ENCODE measurements at regions of chr2 and their contacts with region 1.

Region 1: DNA sequence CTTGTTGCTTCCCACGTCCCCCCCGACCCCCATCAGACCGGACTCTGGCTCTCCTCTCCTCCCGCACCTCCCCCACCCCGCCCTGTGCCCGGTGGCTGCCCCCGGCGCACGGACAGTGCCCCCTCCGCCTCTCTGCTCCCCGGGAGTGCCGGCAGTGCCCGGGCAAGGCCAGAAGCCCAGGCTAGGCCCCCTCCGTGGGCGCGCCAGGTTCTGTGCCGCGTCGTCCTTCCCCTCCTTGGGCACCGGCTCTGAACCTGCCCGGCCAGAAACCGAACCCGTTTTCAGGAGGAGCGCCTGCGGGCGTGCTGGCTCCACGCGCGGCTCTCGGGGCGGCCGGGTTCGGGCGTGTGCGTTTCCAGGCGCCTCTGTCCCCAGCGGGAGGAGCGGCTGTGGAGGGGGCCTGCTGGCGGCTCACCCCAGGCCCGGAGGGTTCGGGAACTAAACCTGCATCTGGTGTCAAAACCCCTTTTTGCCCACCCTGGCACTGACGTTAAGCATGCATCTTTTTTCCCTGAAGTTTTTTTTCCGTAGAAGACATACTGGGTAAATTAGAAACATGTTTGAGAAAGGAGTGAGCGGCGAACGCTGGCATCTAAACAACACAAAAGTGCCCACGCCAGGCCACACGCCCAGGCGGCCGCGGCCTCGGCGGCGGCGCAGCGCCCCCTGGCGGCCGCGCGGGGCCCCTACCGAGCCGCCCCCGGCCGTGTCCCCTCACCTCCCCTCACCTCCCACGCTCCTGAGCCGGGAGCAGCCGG is 123.9 kb upstream of the SLC1A4 start:
- DNase-seq: peak; percentile 80
- H3K4me3 ChIP-seq: peak overlapping the region; percentile 61
- H3K27ac ChIP-seq: peak overlapping the region; percentile 84
- H3K4me1 ChIP-seq: peaks cover 12% of the 10 kb centered on the region
- H3K27me3 ChIP-seq: no peaks in the 10 kb centered on the region
- CTCF ChIP-seq: peak; percentile 63; the same call in 1 of the 2 replicates

Region 2: GRCh38 chr2:64036034-64036705 is 829.1 kb before region 1 on chr2:
- CTCF ChIA-PET with region 1: no interaction called
- POLR2A ChIA-PET with region 1: no interaction called
- intact Hi-C with region 1: loop called (anchors 10 kb)
- DNase-seq: no peak
- H3K4me3 ChIP-seq: no peak overlapping the region
- H3K27ac ChIP-seq: no peak overlapping the region
- H3K4me1 ChIP-seq: no peaks in the 10 kb centered on the region
- H3K27me3 ChIP-seq: no peaks in the 10 kb centered on the region
- CTCF ChIP-seq: no peak

Region 3: GRCh38 chr2:64447317-64448040 is 417.8 kb before region 1 on chr2:
- CTCF ChIA-PET with region 1: interaction called, 13 read pairs
- POLR2A ChIA-PET with region 1: no interaction called
- intact Hi-C with region 1: no loop called
- DNase-seq: no peak
- H3K4me3 ChIP-seq: no peak overlapping the region
- H3K27ac ChIP-seq: no peak overlapping the region
- H3K4me1 ChIP-seq: no peaks in the 10 kb centered on the region
- H3K27me3 ChIP-seq: no peaks in the 10 kb centered on the region
- CTCF ChIP-seq: no peak

Region 4: DNA sequence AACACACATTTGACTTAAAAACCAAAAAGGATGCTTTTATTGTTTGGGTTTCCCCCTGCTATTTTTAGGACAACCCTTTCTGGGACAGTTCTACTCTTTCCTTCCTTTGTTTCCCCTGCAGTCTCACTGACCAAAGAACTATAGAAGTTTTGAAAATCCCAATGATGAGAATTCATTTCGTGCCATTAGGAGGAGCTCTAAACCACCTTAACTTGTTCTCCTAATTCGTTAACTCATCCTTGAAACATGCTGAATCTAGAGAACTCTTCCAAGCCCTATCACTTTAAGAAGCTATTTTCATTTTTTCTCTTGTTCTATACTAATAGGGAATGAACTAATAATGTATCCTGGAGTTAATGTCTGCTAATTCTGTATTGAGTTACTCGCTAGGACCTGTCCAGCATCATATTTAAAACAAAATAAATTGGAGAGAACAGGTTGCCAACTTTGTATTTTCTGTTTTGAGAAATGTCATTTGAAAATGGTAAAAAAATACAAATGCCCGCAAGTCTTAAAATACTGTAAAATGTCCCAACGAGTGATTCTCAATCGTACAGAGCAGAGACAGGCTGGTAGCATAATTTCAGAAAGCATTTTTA is 278.3 kb before region 1 on chr2:
- CTCF ChIA-PET with region 1: interaction called, 4 read pairs
- POLR2A ChIA-PET with region 1: no interaction called
- intact Hi-C with region 1: loop called (anchors 2 kb)
- DNase-seq: peak; percentile 68
- H3K4me3 ChIP-seq: no peak overlapping the region
- H3K27ac ChIP-seq: no peak overlapping the region
- H3K4me1 ChIP-seq: no peaks in the 10 kb centered on the region
- H3K27me3 ChIP-seq: no peaks in the 10 kb centered on the region
- CTCF ChIP-seq: peak; percentile 74

Region 5: DNA sequence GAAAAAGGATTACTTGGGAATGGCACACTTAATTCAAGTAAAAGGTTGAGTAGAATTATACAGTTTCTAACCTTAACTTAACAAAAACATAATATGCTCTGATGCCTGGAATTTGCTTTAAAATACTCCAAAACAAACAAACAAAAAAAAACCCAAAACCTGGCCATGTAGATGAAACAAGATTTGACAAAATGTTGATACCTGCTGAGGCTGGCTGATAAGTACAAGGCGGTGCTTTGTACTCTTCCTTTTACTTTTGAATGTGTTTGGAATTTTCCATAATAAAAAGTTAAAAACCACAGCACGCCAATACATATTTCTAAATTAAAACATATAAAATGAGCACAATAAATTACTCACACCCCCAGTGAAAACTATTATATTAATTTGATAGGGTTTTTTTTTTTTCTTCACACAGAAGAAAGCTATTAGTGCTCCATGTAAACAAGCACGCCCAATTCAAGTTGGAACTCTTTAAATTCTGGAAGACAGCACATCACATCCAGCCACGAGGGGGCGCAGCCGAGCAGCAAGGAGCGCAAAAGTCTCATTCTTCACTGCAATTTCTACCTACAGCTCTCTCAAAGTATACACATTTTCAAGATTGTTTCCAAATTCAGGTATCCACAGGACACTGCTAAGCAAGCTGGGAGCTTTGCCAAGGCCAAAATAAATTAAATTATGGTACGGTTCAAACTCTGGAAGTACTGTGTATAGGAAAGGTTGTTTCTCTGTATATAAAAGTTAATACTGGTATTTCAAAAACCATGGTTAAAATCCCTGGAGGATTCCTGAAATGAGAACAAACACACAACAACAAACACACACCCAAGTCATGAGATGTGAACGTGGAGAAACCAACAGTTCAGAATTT is 219.0 kb before region 1 on chr2:
- CTCF ChIA-PET with region 1: interaction called, 16 read pairs
- POLR2A ChIA-PET with region 1: interaction called, 4 read pairs
- intact Hi-C with region 1: loop called (anchors 1 kb)
- DNase-seq: peak; percentile 88
- H3K4me3 ChIP-seq: peak overlapping the region; percentile 55
- H3K27ac ChIP-seq: peak overlapping the region; percentile 98
- H3K4me1 ChIP-seq: peaks cover 63% of the 10 kb centered on the region
- H3K27me3 ChIP-seq: no peaks in the 10 kb centered on the region
- CTCF ChIP-seq: peak; percentile 97

Region 6: GRCh38 chr2:65227425-65228262 is 362.4 kb after region 1 on chr2 and contains the start of gene ACTR2:
- CTCF ChIA-PET with region 1: no interaction called
- POLR2A ChIA-PET with region 1: no interaction called
- intact Hi-C with region 1: no loop called
- DNase-seq: peak; percentile 98
- H3K4me3 ChIP-seq: peak within 1 kb of the TSS; percentile 93
- H3K27ac ChIP-seq: peak within 1 kb of the TSS; percentile 94
- H3K4me1 ChIP-seq: peaks cover 24% of the 10 kb centered on the region
- H3K27me3 ChIP-seq: no peaks in the 10 kb centered on the region
- CTCF ChIP-seq: no peak
- total RNA-seq, gene ACTR2: 235 and 253 TPM in 2 replicates

Measured in A673 (cell line).